CD4-positive, alpha-beta memory T cell (primary cell): ENCODE measurements at regions of chr20 and their contacts with region 1.

Region 1: GRCh38 chr20:24960302-24960801 is 11.3 kb downstream of the CST7 start:
- DNase-seq: no peak
- H3K4me3 ChIP-seq: no peak overlapping the region
- H3K4me3 Mint-ChIP-seq: peak overlapping the region in 2 of 8 donors; percentile 3 to 67
- H3K27ac ChIP-seq: peak overlapping the region; percentile 66
- H3K27ac Mint-ChIP-seq: peak overlapping the region; percentile 87 to 96 (median 91)
- H3K4me1 ChIP-seq: peaks cover 34% of the 10 kb centered on the region
- H3K4me1 Mint-ChIP-seq: peaks cover 11 to 44% (median 23%) of the 10 kb centered on the region in 4 donors
- H3K27me3 ChIP-seq: no peaks in the 10 kb centered on the region
- H3K27me3 Mint-ChIP-seq: no peaks in the 10 kb centered on the region

Region 2: DNA sequence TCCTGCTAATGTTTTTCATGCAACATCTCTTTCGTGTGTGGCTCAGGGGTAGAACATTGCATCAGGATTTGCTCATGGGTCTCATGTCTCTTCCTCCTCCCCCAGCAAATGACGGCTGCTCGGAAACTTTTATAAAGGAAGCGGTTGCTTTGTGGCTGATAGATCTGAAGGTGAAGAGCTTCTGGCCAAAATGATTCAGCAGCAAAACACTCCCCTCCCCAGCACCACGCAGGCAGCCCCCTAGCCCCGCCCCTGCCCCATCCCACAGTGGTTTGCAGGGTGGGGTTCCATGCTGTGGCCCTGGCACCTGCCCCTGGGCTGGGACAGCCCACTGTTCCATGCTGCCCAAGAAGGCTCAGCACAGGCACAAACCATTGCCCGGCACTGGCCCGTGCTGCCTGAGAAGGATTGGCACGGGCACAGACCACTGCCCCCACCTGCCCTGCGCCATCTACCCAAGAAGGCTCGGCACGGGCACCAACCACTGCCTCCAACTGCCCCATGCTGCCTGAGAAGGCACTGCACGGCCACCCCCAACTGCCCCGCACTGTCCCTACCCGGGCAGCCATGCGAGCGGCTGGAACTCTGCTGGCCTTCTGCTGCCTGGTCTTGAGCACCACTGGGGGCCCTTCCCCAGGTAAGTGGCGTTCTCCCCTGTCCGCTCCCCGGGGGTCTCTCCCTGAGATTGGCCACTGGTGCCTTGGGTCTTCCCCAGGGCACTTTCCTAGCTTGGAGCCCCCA is 11.2 kb before region 1 on chr20 and contains the start of gene CST7:
- CTCF ChIA-PET with region 1: interaction called, 6 read pairs
- POLR2A ChIA-PET with region 1: interaction called, 19 read pairs
- intact Hi-C with region 1: no loop called
- DNase-seq: peak; percentile 85 to 94 (median 87)
- H3K4me3 ChIP-seq: peak within 1 kb of the TSS in 1 of 2 donors; percentile 41
- H3K4me3 Mint-ChIP-seq: peak within 1 kb of the TSS; percentile 65 to 91 (median 84)
- H3K27ac ChIP-seq: peak within 1 kb of the TSS; percentile 65
- H3K27ac Mint-ChIP-seq: peak within 1 kb of the TSS; percentile 81 to 99 (median 96)
- H3K4me1 ChIP-seq: peaks cover 36% of the 10 kb centered on the region
- H3K4me1 Mint-ChIP-seq: peaks cover 32 to 80% (median 57%) of the 10 kb centered on the region in 4 donors
- H3K27me3 ChIP-seq: no peaks in the 10 kb centered on the region
- H3K27me3 Mint-ChIP-seq: no peaks in the 10 kb centered on the region
- total RNA-seq, gene CST7: 23.2 to 23.3 TPM